ENCODE measurements at regions of chr2 and their contacts with region 1.

Region 1: DNA sequence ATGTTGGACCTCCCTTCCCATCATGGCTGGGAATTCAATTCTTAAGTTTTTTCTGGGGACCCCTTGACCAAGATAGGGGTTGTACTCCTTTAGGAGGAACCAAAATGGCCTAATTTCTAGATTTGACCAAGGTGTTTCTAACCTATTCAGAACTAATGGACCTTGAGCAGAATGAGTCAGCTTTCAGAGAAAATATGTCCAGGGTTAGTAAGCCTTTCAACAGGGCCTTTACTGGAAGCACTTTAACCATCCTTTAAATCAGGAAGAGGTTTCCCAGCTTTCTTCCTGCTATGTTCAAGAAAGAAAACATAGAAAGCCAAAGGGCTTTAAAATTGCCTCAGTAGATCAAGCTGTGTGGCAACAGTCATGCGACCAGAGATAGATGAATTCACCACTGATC is 1184.9 kb upstream of the ACVR2A start:
- DNase-seq: no peak
- H3K4me3 ChIP-seq: no peak overlapping the region
- H3K27ac ChIP-seq: no peak overlapping the region
- H3K4me1 ChIP-seq: no peaks in the 10 kb centered on the region
- H3K27me3 ChIP-seq: no peaks in the 10 kb centered on the region
- CTCF ChIP-seq: no peak
- EP300 ChIP-seq: no peak
- POLR2A ChIP-seq: no peak

Region 2: GRCh38 chr2:147850838-147851237 is 1190.9 kb after region 1 on chr2:
- in situ Hi-C with region 1: no loop called
- intact Hi-C with region 1: loop called (anchors 5 kb)
- DNase-seq: no peak
- H3K4me3 ChIP-seq: no peak overlapping the region
- H3K27ac ChIP-seq: no peak overlapping the region
- H3K4me1 ChIP-seq: peaks cover 7 to 67% (median 26%) of the 10 kb centered on the region in 4 donors
- H3K27me3 ChIP-seq: no peaks in the 10 kb centered on the region
- CTCF ChIP-seq: no peak
- EP300 ChIP-seq: no peak
- POLR2A ChIP-seq: no peak